ENCODE measurements at regions of chr7 and their contacts with region 1.

Region 1: GRCh38 chr7:322111-322671 is 32.2 kb downstream of the FOXL3 start:
- DNase-seq: peak; percentile 82
- ATAC-seq: peak; percentile 100
- H3K4me3 ChIP-seq: no peak overlapping the region
- H3K4me3 Mint-ChIP-seq: no peak overlapping the region
- H3K27ac ChIP-seq: no peak overlapping the region
- H3K27ac Mint-ChIP-seq: no peak overlapping the region
- H3K4me1 ChIP-seq: peaks cover 0 to 9% of the 10 kb centered on the region in 2 donors
- H3K4me1 Mint-ChIP-seq: peaks cover 2% of the 10 kb centered on the region
- H3K27me3 ChIP-seq: peaks cover 0 to 7% (median 3%) of the 10 kb centered on the region in 4 experiments
- H3K27me3 Mint-ChIP-seq: peaks cover 19% of the 10 kb centered on the region
- CTCF ChIP-seq: peak; percentile 94

Region 2: GRCh38 chr7:636396-636795 is 314.2 kb after region 1 on chr7:
- CTCF ChIA-PET with region 1: interaction called, 10 read pairs
- POLR2A ChIA-PET with region 1: no interaction called
- intact Hi-C with region 1: loop called (anchors 10 kb)
- DNase-seq: no peak
- ATAC-seq: no peak
- H3K4me3 ChIP-seq: no peak overlapping the region
- H3K4me3 Mint-ChIP-seq: no peak overlapping the region
- H3K27ac ChIP-seq: no peak overlapping the region
- H3K27ac Mint-ChIP-seq: no peak overlapping the region
- H3K4me1 ChIP-seq: no peaks in the 10 kb centered on the region
- H3K4me1 Mint-ChIP-seq: peaks cover 11% of the 10 kb centered on the region
- H3K27me3 ChIP-seq: no peaks in the 10 kb centered on the region
- H3K27me3 Mint-ChIP-seq: no peaks in the 10 kb centered on the region
- CTCF ChIP-seq: no peak

Region 3: GRCh38 chr7:774161-775109 is 452.2 kb after region 1 on chr7:
- CTCF ChIA-PET with region 1: interaction called, 19 read pairs
- POLR2A ChIA-PET with region 1: no interaction called
- intact Hi-C with region 1: no loop called
- DNase-seq: peak; percentile 58
- ATAC-seq: peak; percentile 73
- H3K4me3 ChIP-seq: no peak overlapping the region
- H3K4me3 Mint-ChIP-seq: no peak overlapping the region
- H3K27ac ChIP-seq: no peak overlapping the region
- H3K27ac Mint-ChIP-seq: no peak overlapping the region
- H3K4me1 ChIP-seq: no peaks in the 10 kb centered on the region
- H3K4me1 Mint-ChIP-seq: no peaks in the 10 kb centered on the region
- H3K27me3 ChIP-seq: no peaks in the 10 kb centered on the region
- H3K27me3 Mint-ChIP-seq: no peaks in the 10 kb centered on the region
- CTCF ChIP-seq: peak; percentile 88

Measured in B cell (primary cell).